MCF 10A (cell line): ENCODE measurements at regions of chr6 and their contacts with region 1.

Region 1: DNA sequence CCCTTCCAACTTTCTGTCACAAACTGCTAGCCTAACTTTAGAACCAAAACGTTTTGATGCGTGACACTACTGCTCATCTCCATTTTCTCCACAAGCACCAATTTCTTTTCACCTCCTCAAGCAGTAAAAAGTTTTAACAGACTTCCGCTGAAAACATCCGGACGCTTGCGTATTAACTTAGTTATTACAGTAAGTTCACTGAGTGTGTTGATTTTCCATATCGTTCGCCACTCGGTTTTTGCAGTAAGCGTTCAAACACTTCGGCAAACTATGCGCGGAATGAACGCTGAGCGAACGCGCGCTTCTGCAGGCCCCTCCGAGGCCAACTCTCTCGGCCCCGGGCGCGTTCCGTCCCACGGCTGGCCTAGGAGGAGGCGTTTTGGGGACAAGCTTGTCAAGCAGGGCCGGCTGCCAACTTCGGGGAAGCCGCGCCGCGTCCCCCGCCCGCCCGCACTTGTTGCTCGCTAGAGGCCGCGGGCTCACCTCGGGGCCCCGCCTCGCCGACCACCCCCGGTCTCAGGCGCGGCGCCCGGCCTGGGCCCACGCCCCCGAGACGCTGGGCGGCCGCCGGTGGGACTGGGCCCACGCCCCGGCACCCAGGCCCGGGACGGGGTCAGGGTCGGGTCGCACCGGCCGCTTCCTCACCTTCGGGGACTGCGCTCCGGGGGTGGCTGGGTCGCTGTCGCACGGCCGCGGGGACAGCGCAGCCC is 945 bp downstream of the PHF10 start:
- DNase-seq: peak; percentile 56
- H3K4me3 Mint-ChIP-seq: peak overlapping the region; percentile 90
- H3K27ac Mint-ChIP-seq: peak overlapping the region; percentile 70
- H3K4me1 Mint-ChIP-seq: peaks cover 10% of the 10 kb centered on the region
- H3K27me3 Mint-ChIP-seq: no peaks in the 10 kb centered on the region
- CTCF ChIP-seq: no peak

Region 2: GRCh38 chr6:169028343-169028742 is 695.0 kb before region 1 on chr6:
- CTCF ChIA-PET with region 1: no interaction called
- POLR2A ChIA-PET with region 1: no interaction called
- intact Hi-C with region 1: loop called (anchors 2 kb)
- DNase-seq: peak; percentile 16
- H3K4me3 Mint-ChIP-seq: no peak overlapping the region
- H3K27ac Mint-ChIP-seq: no peak overlapping the region
- H3K4me1 Mint-ChIP-seq: no peaks in the 10 kb centered on the region
- H3K27me3 Mint-ChIP-seq: no peaks in the 10 kb centered on the region
- CTCF ChIP-seq: no peak

Region 3: GRCh38 chr6:169577974-169578373 is 145.4 kb before region 1 on chr6:
- CTCF ChIA-PET with region 1: no interaction called
- POLR2A ChIA-PET with region 1: no interaction called
- intact Hi-C with region 1: no loop called
- DNase-seq: no peak
- H3K4me3 Mint-ChIP-seq: no peak overlapping the region
- H3K27ac Mint-ChIP-seq: no peak overlapping the region
- H3K4me1 Mint-ChIP-seq: peaks cover 9% of the 10 kb centered on the region
- H3K27me3 Mint-ChIP-seq: no peaks in the 10 kb centered on the region
- CTCF ChIP-seq: no peak

Region 4: GRCh38 chr6:169689247-169689646 is 34.1 kb before region 1 on chr6:
- CTCF ChIA-PET with region 1: no interaction called
- POLR2A ChIA-PET with region 1: interaction called, 11 read pairs
- intact Hi-C with region 1: no loop called
- DNase-seq: peak; percentile 95
- H3K4me3 Mint-ChIP-seq: peak overlapping the region; percentile 68
- H3K27ac Mint-ChIP-seq: peak overlapping the region; percentile 87
- H3K4me1 Mint-ChIP-seq: peaks cover 51% of the 10 kb centered on the region
- H3K27me3 Mint-ChIP-seq: no peaks in the 10 kb centered on the region
- CTCF ChIP-seq: no peak

Region 5: GRCh38 chr6:169701954-169702839 is 21.2 kb before region 1 on chr6 and contains the starts of genes C6orf120 and WDR27:
- CTCF ChIA-PET with region 1: interaction called, 8 read pairs
- POLR2A ChIA-PET with region 1: interaction called, 102 read pairs
- intact Hi-C with region 1: no loop called
- DNase-seq: peak; percentile 96
- H3K4me3 Mint-ChIP-seq: peak within 1 kb of the TSS; percentile 86
- H3K27ac Mint-ChIP-seq: peak within 1 kb of the TSS; percentile 46
- H3K4me1 Mint-ChIP-seq: peaks cover 42% of the 10 kb centered on the region
- H3K27me3 Mint-ChIP-seq: no peaks in the 10 kb centered on the region
- CTCF ChIP-seq: no peak
- total RNA-seq, gene C6orf120: 25.3 and 26.3 TPM in 2 replicates
- total RNA-seq, gene WDR27: 65.4 and 80.6 TPM in 2 replicates

Region 6: DNA sequence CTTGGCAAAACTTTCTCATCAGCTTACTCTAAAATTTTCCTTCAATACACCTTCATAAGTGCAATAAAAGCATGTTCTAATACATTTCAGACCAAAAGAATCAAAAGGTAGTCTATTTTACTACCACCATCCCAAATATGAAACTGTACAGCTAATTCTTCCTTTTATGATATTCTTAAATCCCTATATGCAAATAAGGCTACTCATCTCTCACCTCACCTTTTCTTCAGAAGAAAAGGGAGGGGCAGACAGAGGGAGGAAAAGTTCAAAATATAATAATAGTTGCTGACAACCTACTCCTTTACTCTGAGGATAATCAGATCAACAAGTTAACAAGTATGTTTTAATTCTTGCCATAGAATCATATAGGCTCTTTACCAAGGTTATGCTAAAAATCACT is 14.1 kb before region 1 on chr6:
- CTCF ChIA-PET with region 1: interaction called, 6 read pairs
- POLR2A ChIA-PET with region 1: interaction called, 102 read pairs
- intact Hi-C with region 1: no loop called
- DNase-seq: no peak
- H3K4me3 Mint-ChIP-seq: no peak overlapping the region
- H3K27ac Mint-ChIP-seq: peak overlapping the region; percentile 16
- H3K4me1 Mint-ChIP-seq: peaks cover 10% of the 10 kb centered on the region
- H3K27me3 Mint-ChIP-seq: no peaks in the 10 kb centered on the region
- CTCF ChIP-seq: no peak

Region 7: GRCh38 chr6:169751242-169752073 is 28.1 kb after region 1 on chr6 and contains the starts of genes DYNLT2 and ERMARD:
- CTCF ChIA-PET with region 1: interaction called, 4 read pairs
- POLR2A ChIA-PET with region 1: interaction called, 73 read pairs
- intact Hi-C with region 1: no loop called
- DNase-seq: peak; percentile 92
- H3K4me3 Mint-ChIP-seq: peak within 1 kb of the TSS; percentile 100
- H3K27ac Mint-ChIP-seq: peak within 1 kb of the TSS; percentile 100
- H3K4me1 Mint-ChIP-seq: peaks cover 17% of the 10 kb centered on the region
- H3K27me3 Mint-ChIP-seq: no peaks in the 10 kb centered on the region
- CTCF ChIP-seq: no peak
- total RNA-seq, gene DYNLT2: 0.79 and 1.3 TPM in 2 replicates
- total RNA-seq, gene ERMARD: 42.8 and 51.7 TPM in 2 replicates